Mammary epithelial cell (primary cell): ENCODE measurements at regions of chr14 and their contacts with region 1.

Region 1: GRCh38 chr14:64340560-64341196 is 46.5 kb upstream of the ESR2 start:
- DNase-seq: no peak
- H3K4me3 ChIP-seq: no peak overlapping the region
- H3K27ac ChIP-seq: no peak overlapping the region
- H3K4me1 ChIP-seq: peaks cover 13% of the 10 kb centered on the region
- H3K27me3 ChIP-seq: no peaks in the 10 kb centered on the region
- CTCF ChIP-seq: no peak

Region 2: GRCh38 chr14:64387694-64388532 is 47.2 kb after region 1 on chr14 and contains the start of gene MTHFD1:
- CTCF ChIA-PET with region 1: no interaction called
- dilution Hi-C with region 1: no loop called
- in situ Hi-C with region 1: no loop called
- intact Hi-C with region 1: loop called (anchors 5 kb)
- DNase-seq: peak; percentile 99
- H3K4me3 ChIP-seq: peak within 1 kb of the TSS; percentile 69 to 92 (median 88)
- H3K27ac ChIP-seq: peak within 1 kb of the TSS; percentile 75
- H3K4me1 ChIP-seq: no peaks in the 10 kb centered on the region
- H3K27me3 ChIP-seq: no peaks in the 10 kb centered on the region
- CTCF ChIP-seq: no peak
- total RNA-seq, gene MTHFD1: 39.5 to 117 TPM

Region 3: DNA sequence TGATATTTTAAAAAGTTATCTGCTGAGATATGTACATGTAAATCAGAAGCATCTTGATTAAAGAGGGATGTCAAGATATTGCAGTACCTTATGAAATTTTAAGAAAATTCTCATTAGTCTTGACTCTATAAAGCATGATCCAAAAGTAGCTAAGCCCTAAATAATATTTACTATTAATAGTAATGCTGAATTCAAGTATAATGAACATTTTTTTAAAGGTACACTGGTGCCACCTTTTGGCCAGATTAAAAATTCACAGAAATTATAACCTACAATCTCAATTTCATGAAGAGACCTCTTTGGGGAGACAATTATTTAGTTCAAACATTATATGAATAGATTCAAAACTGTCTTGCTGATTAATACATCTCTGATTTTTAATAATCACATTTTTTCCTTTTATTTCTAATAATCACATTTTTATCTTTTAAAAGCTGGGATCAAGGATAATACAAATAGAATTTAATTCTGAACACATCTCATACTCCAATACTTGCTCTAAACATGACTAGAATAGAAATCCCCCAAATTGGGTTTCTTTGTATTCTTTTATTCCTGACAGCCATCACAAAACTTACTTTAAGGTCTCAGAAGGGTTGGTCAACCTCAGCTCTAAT is 138.1 kb after region 1 on chr14:
- CTCF ChIA-PET with region 1: interaction called, 4 read pairs
- dilution Hi-C with region 1: no loop called
- in situ Hi-C with region 1: loop called in 1 of 2 experiments (anchors 10 kb)
- intact Hi-C with region 1: loop called (anchors 1 kb)
- DNase-seq: peak; percentile 3
- H3K4me3 ChIP-seq: no peak overlapping the region
- H3K27ac ChIP-seq: no peak overlapping the region
- H3K4me1 ChIP-seq: no peaks in the 10 kb centered on the region
- H3K27me3 ChIP-seq: no peaks in the 10 kb centered on the region
- CTCF ChIP-seq: peak; percentile 25 to 34

Region 4: GRCh38 chr14:64549781-64550620 is 209.3 kb after region 1 on chr14 and contains the start of gene PPP1R36:
- CTCF ChIA-PET with region 1: no interaction called
- dilution Hi-C with region 1: no loop called
- in situ Hi-C with region 1: no loop called
- intact Hi-C with region 1: no loop called
- DNase-seq: no peak
- H3K4me3 ChIP-seq: no peak within 1 kb of the TSS
- H3K27ac ChIP-seq: no peak within 1 kb of the TSS
- H3K4me1 ChIP-seq: peaks cover 7% of the 10 kb centered on the region
- H3K27me3 ChIP-seq: peaks cover 6% of the 10 kb centered on the region
- CTCF ChIP-seq: no peak
- total RNA-seq, gene PPP1R36: 1.7 TPM in 1 of 2 donors, not detected in the other

Region 5: GRCh38 chr14:64636208-64636979 is 295.7 kb after region 1 on chr14:
- CTCF ChIA-PET with region 1: no interaction called
- dilution Hi-C with region 1: no loop called
- in situ Hi-C with region 1: loop called in 1 of 2 experiments (anchors 10 kb)
- intact Hi-C with region 1: loop called (anchors 1 kb)
- DNase-seq: peak; percentile 29
- H3K4me3 ChIP-seq: no peak overlapping the region
- H3K27ac ChIP-seq: no peak overlapping the region
- H3K4me1 ChIP-seq: peaks cover 16% of the 10 kb centered on the region
- H3K27me3 ChIP-seq: no peaks in the 10 kb centered on the region
- CTCF ChIP-seq: peak; percentile 71 to 81

Region 6: GRCh38 chr14:64891839-64892375 is 551.2 kb after region 1 on chr14:
- CTCF ChIA-PET with region 1: no interaction called
- dilution Hi-C with region 1: no loop called
- in situ Hi-C with region 1: no loop called
- intact Hi-C with region 1: loop called (anchors 5 kb)
- DNase-seq: peak; percentile 43
- H3K4me3 ChIP-seq: no peak overlapping the region
- H3K27ac ChIP-seq: no peak overlapping the region
- H3K4me1 ChIP-seq: no peaks in the 10 kb centered on the region
- H3K27me3 ChIP-seq: peaks cover 2% of the 10 kb centered on the region
- CTCF ChIP-seq: peak; percentile 44 to 59